Activated naive CD4-positive, alpha-beta T cell treated with anti-CD3 and anti-CD28 coated beads for 36 hours (primary cell): ENCODE measurements at regions of chr17 and their contacts with region 1.

Region 1: DNA sequence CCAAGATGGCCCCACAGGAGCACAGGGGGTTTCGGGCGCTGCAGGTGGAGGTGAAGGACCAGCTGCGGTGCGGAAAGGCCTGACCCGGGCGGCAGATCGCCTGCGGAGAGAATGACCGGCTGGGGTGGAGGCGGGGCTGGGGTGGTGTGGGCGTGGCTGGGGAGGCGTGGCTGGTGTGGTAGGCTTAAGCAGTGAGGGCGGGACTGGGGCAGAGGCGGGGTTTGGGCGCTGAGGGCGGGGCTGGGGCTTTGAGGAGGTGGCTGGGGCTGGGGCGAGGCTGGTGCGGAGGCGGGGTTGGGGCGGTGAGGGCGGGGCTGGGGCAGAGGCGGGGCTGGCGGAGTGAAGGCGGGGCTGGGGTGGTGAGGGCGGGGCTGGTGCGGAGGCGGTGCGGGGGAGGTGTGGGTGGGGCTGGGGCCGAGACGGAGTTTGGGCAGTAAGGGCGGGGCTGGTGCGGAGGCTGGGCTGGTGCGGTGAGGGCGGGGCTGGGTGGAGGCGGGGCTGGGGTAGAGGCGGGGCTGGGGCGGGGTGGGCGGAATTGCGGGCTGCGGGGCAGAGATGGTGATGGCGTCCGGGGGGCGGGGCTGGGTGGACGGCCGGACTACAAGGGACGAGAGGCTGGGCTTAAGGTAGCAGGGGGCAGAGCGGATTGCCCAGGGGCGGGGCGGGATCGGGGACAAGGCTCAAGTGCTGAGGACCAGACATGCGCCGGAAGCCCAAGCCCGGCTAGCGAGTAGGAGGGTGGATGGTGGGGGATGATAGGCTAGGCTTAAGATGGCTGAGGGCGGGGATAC is 9.9 kb upstream of the GSDMA start:
- DNase-seq: peak; percentile 98
- H3K4me3 Mint-ChIP-seq: peak overlapping the region; percentile 79
- H3K27ac Mint-ChIP-seq: peak overlapping the region; percentile 66
- H3K4me1 Mint-ChIP-seq: peaks cover 10% of the 10 kb centered on the region
- H3K27me3 Mint-ChIP-seq: no peaks in the 10 kb centered on the region

Region 2: DNA sequence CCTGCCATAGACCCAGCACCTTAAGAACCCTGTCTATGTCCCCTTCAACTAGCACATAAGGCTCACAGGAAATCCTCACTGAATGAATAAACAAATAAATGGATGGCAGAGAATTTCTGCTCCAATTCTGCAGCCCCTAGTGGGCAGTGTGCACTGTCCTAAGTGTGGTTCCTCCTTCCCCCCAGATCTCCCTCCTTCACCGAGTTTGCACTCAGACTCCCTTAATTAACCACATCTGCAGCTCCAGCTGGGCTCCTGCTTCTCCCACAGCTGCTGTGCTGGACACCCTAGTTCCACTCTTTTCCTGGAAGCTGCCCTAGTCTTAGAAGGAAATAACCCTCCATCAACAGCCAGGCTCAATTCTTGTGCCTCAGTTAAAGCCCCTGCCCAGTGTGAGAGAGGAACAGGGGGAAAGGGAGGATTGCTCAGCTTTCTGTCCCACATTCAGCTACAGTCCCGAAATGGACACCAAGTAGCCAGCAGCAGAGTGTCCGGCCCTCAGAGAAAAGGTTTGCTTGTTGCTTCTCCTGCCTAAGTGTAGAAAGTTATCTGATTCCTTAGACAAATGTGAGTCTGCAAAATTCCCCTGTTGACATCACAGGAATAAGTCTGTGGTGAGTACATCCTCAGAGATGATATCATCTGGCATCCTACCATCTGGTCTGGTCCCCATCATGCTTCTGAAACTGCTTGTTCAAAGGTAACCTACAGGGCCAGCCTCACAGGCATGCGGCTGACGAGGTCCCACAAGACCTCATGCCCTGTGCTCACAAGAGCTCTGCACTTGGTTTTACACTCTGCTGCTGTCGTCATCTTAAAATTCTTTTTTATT is 13.1 kb before region 1 on chr17:
- CTCF ChIA-PET with region 1: interaction called, 12 read pairs
- intact Hi-C with region 1: loop called (anchors 1 kb)
- DNase-seq: peak; percentile 75
- H3K4me3 Mint-ChIP-seq: no peak overlapping the region
- H3K27ac Mint-ChIP-seq: peak overlapping the region; percentile 36
- H3K4me1 Mint-ChIP-seq: peaks cover 14% of the 10 kb centered on the region
- H3K27me3 Mint-ChIP-seq: no peaks in the 10 kb centered on the region

Region 3: GRCh38 chr17:39969375-39969774 is 16.5 kb after region 1 on chr17:
- CTCF ChIA-PET with region 1: interaction called, 11 read pairs
- intact Hi-C with region 1: no loop called
- DNase-seq: no peak
- H3K4me3 Mint-ChIP-seq: no peak overlapping the region
- H3K27ac Mint-ChIP-seq: no peak overlapping the region
- H3K4me1 Mint-ChIP-seq: peaks cover 3% of the 10 kb centered on the region
- H3K27me3 Mint-ChIP-seq: peaks cover 11% of the 10 kb centered on the region

Region 4: DNA sequence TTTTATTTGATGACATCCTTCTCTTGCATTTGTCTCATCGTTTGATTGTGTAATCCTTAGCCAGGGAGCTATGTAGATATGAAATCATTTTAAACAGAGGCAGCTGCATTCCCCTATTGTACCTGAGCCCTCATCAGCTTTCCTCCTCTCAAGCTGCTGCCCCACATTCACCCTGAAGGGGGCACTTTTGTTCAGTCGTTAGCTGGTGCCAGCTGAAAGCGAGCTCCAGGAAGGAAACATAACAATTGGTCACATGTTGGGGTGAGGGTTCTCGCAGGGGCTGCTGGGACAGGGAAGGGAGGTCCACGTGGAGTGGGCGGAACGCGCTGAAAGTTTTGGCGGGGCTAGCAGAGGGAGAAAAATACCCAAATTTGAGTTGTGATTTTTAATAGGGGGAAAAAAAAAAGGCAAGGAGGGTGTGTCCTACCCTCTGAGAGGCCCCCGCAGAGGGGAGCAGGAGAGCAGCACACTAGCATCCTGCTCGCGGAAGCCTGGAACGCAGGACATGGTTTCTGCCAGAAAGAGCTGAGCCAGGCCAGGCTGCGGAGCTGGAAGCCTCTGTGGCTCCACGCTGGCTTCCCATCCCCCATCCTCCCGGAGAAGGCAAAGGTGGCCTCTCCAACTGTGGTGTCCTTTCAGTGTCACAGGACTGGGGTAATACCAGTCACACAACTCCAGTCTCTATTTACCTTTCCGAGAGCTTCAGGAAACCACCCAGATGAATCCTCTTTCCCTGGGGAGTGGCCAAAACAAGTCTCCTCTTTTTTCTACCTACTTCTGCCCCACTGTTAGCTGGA is 160.4 kb after region 1 on chr17:
- CTCF ChIA-PET with region 1: no interaction called
- intact Hi-C with region 1: no loop called
- DNase-seq: peak; percentile 98
- H3K4me3 Mint-ChIP-seq: peak overlapping the region; percentile 81
- H3K27ac Mint-ChIP-seq: peak overlapping the region; percentile 91
- H3K4me1 Mint-ChIP-seq: peaks cover 52% of the 10 kb centered on the region
- H3K27me3 Mint-ChIP-seq: no peaks in the 10 kb centered on the region